Stomach (tissue), 19 donors: ENCODE measurements at regions of chr10 and their contacts with region 1.

Region 1: DNA sequence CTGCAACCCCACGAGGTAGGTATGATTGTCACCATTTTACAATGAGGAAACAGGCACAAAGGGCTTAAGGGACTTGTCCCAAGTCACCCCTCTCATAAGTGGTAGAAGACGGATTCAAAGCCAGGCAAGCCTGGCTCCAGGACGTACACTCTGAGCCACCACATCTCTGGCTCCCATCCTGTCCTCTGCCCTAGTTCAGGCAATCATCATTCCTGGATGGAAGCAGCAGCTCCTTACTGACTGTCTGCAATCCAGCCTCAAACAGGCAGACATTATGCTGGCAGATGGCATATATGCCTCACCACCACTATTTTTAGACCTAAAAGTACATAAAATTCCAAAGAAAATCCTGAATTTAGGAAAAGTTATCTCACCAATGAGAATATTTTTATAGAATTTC is 100.7 kb downstream of the USP6NL start:
- DNase-seq: no peak
- H3K4me3 ChIP-seq: no peak overlapping the region
- H3K27ac ChIP-seq: no peak overlapping the region
- H3K4me1 ChIP-seq: peaks cover 0 to 5% (median 2%) of the 10 kb centered on the region in 4 donors
- H3K27me3 ChIP-seq: no peaks in the 10 kb centered on the region
- CTCF ChIP-seq: no peak
- EP300 ChIP-seq: no peak
- POLR2A ChIP-seq: no peak

Region 2: DNA sequence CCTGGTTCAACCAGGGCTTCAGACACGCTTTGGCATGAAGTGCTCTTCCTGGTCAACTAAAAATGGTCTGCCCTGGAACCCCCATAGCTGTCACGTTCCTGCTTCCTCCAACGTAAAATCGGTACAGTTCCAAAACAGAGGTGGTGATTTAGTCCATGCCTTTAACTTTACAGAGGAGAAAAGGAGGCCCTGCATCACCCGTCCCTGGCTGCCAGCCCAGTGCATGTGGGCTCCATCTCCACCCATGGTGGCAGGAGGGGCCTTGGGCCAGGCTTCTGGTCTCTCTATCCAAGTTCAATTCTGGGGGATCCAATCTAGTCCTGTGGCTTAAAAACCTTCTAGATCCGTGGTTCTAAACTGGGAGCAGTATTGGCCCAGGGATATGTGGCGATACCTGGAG is 250.1 kb after region 1 on chr10:
- intact Hi-C with region 1: loop called (anchors 5 kb)
- DNase-seq: no peak
- H3K4me3 ChIP-seq: no peak overlapping the region
- H3K27ac ChIP-seq: no peak overlapping the region
- H3K4me1 ChIP-seq: peaks cover 17 to 26% (median 19%) of the 10 kb centered on the region in 4 donors
- H3K27me3 ChIP-seq: no peaks in the 10 kb centered on the region
- CTCF ChIP-seq: no peak
- EP300 ChIP-seq: no peak
- POLR2A ChIP-seq: no peak